Adrenal gland (tissue), 19 donors: ENCODE measurements at regions of chr12 and their contacts with region 1.

Region 1: GRCh38 chr12:17866802-17867201 is 223.2 kb downstream of the RERGL start:
- DNase-seq: no peak
- H3K4me3 ChIP-seq: no peak overlapping the region
- H3K27ac ChIP-seq: no peak overlapping the region
- H3K4me1 ChIP-seq: no peaks in the 10 kb centered on the region
- H3K27me3 ChIP-seq: no peaks in the 10 kb centered on the region
- CTCF ChIP-seq: no peak
- POLR2A ChIP-seq: no peak

Region 2: DNA sequence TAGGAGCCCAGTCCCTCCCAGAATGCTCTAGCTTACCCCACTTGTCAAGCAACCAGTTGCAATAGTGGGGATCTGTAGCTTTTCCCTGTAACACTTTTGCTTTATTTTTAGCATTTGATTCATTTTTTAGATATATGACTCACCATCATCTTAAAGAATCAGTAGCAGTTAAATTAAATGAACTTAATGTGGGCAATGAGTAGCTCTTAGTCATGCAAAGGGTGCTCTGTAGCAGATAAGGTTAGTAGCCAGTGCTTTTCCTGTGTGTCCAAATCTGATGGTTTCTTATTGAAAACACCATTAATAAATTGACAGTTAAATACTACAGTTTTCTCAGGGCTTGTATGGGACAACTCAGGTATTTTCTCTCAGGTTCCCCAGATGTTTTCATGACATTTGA is 88.6 kb before region 1 on chr12:
- intact Hi-C with region 1: loop called (anchors 2 to 10 kb)
- DNase-seq: no peak
- H3K4me3 ChIP-seq: no peak overlapping the region
- H3K27ac ChIP-seq: no peak overlapping the region
- H3K4me1 ChIP-seq: no peaks in the 10 kb centered on the region
- H3K27me3 ChIP-seq: no peaks in the 10 kb centered on the region
- CTCF ChIP-seq: no peak
- POLR2A ChIP-seq: no peak

Region 3: DNA sequence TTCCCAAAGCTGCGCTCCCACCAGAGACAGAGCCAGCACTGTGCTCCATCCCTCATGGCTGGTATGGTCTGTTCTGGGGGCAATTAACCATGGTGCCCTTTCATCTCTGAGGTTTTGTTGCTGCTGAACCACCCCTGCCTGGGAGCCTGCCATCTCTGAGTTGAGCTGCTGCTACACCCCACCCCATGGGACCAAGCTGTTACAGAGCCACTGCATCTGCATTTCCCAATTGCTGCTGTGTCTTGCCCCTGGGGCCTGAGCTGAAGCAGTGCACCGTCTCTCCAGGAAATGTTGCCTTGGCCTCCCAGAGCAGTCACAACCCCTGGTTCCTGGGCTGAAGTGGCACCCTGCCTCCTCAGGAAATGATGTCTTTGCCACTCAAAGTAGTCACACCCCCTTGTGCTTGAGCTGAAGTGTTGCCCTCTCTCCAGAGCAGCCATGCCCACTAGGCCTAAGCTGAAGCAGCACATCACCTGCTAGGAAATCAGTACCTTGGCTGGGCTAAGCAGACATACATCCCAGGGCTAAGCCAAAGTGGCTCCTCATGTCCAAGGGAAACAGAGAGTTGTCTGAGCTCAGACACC is 82.8 kb after region 1 on chr12:
- intact Hi-C with region 1: no loop called
- DNase-seq: no peak
- H3K4me3 ChIP-seq: no peak overlapping the region
- H3K27ac ChIP-seq: no peak overlapping the region
- H3K4me1 ChIP-seq: no peaks in the 10 kb centered on the region
- H3K27me3 ChIP-seq: no peaks in the 10 kb centered on the region
- CTCF ChIP-seq: no peak
- POLR2A ChIP-seq: no peak

Region 4: GRCh38 chr12:18158774-18159557 is 292.2 kb after region 1 on chr12:
- intact Hi-C with region 1: no loop called
- DNase-seq: peak in 4 of 7 donors; percentile 27 to 54 (median 38)
- H3K4me3 ChIP-seq: no peak overlapping the region
- H3K27ac ChIP-seq: no peak overlapping the region
- H3K4me1 ChIP-seq: no peaks in the 10 kb centered on the region
- H3K27me3 ChIP-seq: no peaks in the 10 kb centered on the region
- CTCF ChIP-seq: peak in 5 of 6 experiments; percentile 26 to 65 (median 46)
- POLR2A ChIP-seq: no peak